Naive thymus-derived CD8-positive, alpha-beta T cell (primary cell): ENCODE measurements at regions of chr19 and their contacts with region 1.

Region 1: GRCh38 chr19:48637170-48637947 is at the start of gene DBP:
- DNase-seq: peak; percentile 97 to 100 (median 100)
- ATAC-seq: peak; percentile 80 to 81
- H3K4me3 Mint-ChIP-seq: peak within 1 kb of the TSS; percentile 81 to 100 (median 98)
- H3K27ac Mint-ChIP-seq: peak within 1 kb of the TSS; percentile 97 to 100 (median 99)
- H3K4me1 Mint-ChIP-seq: peaks cover 31 to 59% (median 52%) of the 10 kb centered on the region in 4 donors
- H3K27me3 Mint-ChIP-seq: no peaks in the 10 kb centered on the region
- polyA plus RNA-seq, gene DBP: 37.5 to 97.8 (median 63.1) TPM

Region 2: GRCh38 chr19:48624067-48624594 is 13.2 kb before region 1 on chr19:
- POLR2A ChIA-PET with region 1: interaction called, 70 read pairs
- DNase-seq: peak; percentile 83 to 96 (median 90)
- ATAC-seq: peak; percentile 75 to 80
- H3K4me3 Mint-ChIP-seq: peak overlapping the region; percentile 80 to 98 (median 87)
- H3K27ac Mint-ChIP-seq: peak overlapping the region; percentile 90 to 98 (median 94)
- H3K4me1 Mint-ChIP-seq: peaks cover 30 to 55% (median 44%) of the 10 kb centered on the region in 4 donors
- H3K27me3 Mint-ChIP-seq: no peaks in the 10 kb centered on the region